Heart left ventricle (tissue), 16 donors: ENCODE measurements at regions of chr1 and their contacts with region 1.

Region 1: DNA sequence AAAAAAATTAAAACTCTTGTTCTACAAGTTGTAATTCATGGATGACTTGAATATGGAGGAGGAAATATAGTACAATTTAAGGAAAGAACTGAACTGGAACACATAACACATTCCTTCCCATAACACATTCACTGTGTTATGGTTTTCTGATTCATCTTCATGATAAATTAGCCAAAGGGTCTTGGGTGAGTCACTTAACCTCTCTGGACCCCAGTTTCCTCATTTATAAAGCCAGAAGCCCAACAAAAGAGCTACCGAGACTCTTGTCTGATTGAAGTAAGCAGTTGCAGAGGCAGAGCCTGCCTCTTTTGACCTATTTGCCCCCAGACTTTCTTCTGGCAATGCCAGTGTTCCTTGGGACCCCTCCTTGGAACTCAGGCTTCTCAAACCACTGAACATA is 161.9 kb upstream of the KCTD3 start:
- DNase-seq: no peak
- ATAC-seq: no peak
- H3K4me3 ChIP-seq: no peak overlapping the region
- H3K27ac ChIP-seq: no peak overlapping the region
- H3K4me1 ChIP-seq: no peaks in the 10 kb centered on the region
- H3K27me3 ChIP-seq: no peaks in the 10 kb centered on the region
- CTCF ChIP-seq: no peak
- POLR2A ChIP-seq: no peak

Region 2: DNA sequence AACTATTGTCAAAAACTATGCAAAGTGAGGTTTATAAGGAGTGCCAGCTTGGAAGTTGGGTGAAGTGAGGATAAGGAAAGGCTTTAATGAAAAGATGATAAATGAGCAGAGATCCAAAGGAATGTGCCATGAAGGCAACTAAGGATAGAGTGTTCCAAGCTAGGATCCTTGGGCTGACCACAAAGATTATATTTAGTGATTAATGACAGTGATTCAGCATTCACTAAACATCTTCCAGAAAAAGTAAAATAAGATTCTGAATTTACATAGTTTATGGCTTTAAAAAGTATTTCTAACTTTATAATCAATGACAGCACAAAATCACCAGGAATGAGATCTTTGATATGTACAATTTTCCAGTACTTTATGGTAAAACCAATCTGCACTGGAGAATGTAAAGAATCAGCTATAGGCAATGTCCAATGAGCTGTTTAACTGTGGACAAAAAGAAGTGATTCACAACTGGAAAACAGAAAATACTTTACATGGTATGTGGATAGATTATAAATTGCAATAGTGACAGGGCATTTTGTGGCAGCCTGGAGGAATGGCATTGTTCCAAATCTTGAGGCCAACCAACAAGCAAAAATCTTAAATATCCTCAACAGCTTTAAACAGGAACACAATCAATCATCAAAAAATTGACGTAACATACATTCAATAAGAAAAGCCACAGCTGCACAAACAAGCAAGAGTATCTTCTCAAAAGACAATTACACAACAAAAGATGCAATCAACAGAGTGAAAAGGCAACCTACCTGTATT is 70.8 kb after region 1 on chr1:
- intact Hi-C with region 1: no loop called
- DNase-seq: no peak
- ATAC-seq: no peak
- H3K4me3 ChIP-seq: no peak overlapping the region
- H3K27ac ChIP-seq: no peak overlapping the region
- H3K4me1 ChIP-seq: no peaks in the 10 kb centered on the region
- H3K27me3 ChIP-seq: no peaks in the 10 kb centered on the region
- CTCF ChIP-seq: no peak
- POLR2A ChIP-seq: no peak

Region 3: DNA sequence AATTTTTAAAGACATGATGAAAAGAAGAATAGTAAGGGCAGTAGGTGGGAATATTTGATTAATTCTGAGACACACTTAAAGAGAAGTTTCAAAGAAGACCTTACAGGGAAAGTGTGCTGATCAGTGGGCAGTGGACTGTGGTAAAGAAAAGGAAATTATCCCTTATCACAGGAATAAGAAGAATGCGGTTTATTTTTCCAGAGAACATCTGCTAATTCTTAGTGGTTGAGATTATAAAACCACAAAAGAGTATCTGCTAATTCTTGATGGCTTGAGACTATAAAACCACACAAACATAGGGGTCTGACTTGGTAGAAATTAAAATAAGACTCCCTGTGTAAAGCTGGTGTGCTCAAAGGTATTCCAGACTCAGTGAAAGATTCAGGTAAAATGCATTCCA is 101.9 kb after region 1 on chr1:
- intact Hi-C with region 1: loop called in 1 of 10 experiments (anchors 10 kb)
- DNase-seq: no peak
- ATAC-seq: no peak
- H3K4me3 ChIP-seq: no peak overlapping the region
- H3K27ac ChIP-seq: no peak overlapping the region
- H3K4me1 ChIP-seq: no peaks in the 10 kb centered on the region
- H3K27me3 ChIP-seq: no peaks in the 10 kb centered on the region
- CTCF ChIP-seq: no peak
- POLR2A ChIP-seq: no peak